Pancreas (tissue), 10 donors: ENCODE measurements at regions of chr6 and their contacts with region 1.

Region 1: DNA sequence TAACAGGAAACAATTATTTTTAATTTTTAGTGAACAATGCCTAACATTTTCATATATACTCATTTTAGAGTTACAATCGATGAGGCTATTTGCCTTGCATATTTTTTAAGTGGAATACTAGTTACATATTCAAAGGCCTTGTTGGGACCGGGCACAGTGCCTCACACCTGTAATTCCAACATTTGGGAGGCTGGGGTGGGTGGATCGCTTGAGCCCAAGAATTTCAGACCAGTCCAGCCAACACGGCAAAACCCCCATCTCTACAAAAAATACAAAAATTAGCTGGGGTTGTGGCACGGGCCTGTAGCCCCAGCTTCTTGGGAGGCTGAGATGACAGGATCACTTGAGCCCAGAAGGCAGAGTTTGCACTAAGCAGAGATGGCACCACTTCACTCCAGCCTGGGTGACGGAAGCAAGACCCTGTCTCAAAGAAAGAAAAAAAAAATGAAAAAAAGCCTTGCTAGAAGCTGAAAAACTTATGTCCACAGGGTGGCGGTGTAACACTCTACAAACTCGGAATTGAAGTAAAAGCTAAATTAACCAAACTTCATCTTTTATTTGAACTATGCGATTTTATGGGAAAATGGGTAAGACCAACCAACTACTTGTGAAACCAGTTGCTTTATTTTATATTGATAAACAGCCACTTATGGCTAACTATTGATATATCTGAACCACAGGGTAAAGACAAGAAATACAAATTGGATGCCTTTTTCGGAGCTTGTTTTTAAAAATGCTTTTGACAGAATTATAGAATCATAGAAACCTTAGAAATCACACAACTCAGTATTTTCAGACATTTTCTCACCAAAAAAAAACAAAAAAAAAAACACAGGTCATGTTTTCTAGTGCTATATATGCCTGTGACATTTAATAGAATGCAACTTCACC is 24.1 kb upstream of the ROS1 start:
- DNase-seq: peak in 3 of 6 donors; percentile 29 to 59 (median 42)
- ATAC-seq: peak in 3 of 4 donors; percentile 72 to 80 (median 79)
- H3K4me3 ChIP-seq: no peak overlapping the region
- H3K27ac ChIP-seq: no peak overlapping the region
- H3K4me1 ChIP-seq: peaks cover 0 to 4% (median 0%) of the 10 kb centered on the region in 3 donors
- H3K27me3 ChIP-seq: no peaks in the 10 kb centered on the region
- CTCF ChIP-seq: peak; percentile 11 to 62 (median 56)

Region 2: DNA sequence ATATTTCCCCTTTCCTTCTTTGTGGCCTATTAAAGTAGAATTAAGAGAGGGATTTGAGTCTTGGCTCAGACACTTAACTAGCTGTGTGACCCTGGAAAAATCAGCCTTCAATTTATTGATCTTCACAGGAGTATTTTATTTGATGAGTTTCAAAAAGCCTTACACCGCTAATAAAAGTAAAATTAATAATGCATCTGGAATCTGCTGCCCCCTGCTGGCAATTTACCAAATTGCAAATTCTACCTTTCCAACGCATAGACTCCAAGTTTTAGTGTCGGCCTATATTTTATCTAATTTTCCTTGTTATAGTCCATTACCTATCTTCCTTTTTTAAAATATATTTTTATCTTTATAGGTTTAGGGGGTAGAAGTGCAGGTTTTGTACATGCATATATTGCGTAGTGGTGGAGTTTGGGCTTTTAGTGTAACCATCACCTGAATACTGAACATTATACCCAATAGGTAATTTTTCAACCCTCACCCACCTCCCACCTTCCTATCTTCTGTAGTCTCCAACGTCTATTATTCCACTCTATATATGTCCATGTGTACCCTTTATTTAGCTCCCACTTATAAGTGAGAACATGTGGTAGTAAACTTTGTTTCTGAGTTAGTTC is 106.2 kb after region 1 on chr6:
- intact Hi-C with region 1: loop called in 2 of 3 experiments (anchors 5 kb)
- DNase-seq: peak in 2 of 6 donors; percentile 26 to 58
- ATAC-seq: peak in 3 of 4 donors; percentile 60 to 72 (median 71)
- H3K4me3 ChIP-seq: no peak overlapping the region
- H3K27ac ChIP-seq: no peak overlapping the region
- H3K4me1 ChIP-seq: no peaks in the 10 kb centered on the region
- H3K27me3 ChIP-seq: no peaks in the 10 kb centered on the region
- CTCF ChIP-seq: peak; percentile 76 to 88 (median 77)